CD8-positive, alpha-beta T cell (primary cell): ENCODE measurements at regions of chr7 and their contacts with region 1.

Region 1: DNA sequence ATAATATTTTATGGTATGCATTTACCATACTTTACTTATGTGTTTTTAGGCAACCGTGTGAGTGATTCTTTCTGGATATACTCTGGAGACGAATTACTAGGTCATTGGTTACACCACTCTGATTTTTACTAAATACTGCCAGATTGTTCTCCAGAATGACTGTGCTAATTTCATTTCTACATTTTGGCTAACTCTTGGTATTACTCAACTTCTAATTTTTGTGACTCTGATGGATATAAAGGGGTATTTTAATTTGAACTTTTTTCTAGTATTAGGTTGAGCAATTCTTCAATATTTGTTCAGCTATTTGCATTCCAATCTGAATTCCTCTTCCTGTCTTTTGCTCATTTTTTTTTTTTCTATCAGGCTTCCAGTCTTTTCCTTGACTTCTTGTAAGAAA is 223.6 kb downstream of the MDFIC start:
- DNase-seq: no peak
- ATAC-seq: no peak
- H3K4me3 ChIP-seq: no peak overlapping the region
- H3K4me3 Mint-ChIP-seq: no peak overlapping the region
- H3K27ac ChIP-seq: no peak overlapping the region
- H3K27ac Mint-ChIP-seq: no peak overlapping the region
- H3K4me1 ChIP-seq: no peaks in the 10 kb centered on the region
- H3K4me1 Mint-ChIP-seq: no peaks in the 10 kb centered on the region
- H3K27me3 ChIP-seq: no peaks in the 10 kb centered on the region
- H3K27me3 Mint-ChIP-seq: no peaks in the 10 kb centered on the region
- CTCF ChIP-seq: no peak

Region 2: DNA sequence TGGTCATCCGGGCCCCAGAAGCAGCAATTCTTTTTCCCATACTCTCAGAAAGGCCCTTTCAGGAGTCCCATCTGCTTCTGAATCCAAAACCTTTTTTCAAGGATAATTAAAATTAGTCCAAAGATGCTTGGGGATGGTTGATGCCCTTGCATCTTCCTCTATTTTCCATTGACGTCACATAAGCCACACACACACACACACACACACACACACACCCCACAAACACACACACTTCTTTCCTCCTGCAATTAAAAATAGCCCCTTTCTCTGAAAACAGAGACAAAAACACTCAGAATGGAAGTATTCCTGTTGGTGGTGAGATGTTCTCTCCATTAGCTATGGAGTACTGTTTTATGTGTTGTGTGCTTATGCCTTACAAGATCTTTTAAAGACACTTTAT is 397.9 kb before region 1 on chr7:
- CTCF ChIA-PET with region 1: no interaction called
- POLR2A ChIA-PET with region 1: no interaction called
- intact Hi-C with region 1: no loop called
- DNase-seq: no peak
- ATAC-seq: no peak
- H3K4me3 ChIP-seq: no peak overlapping the region
- H3K4me3 Mint-ChIP-seq: no peak overlapping the region
- H3K27ac ChIP-seq: no peak overlapping the region
- H3K27ac Mint-ChIP-seq: no peak overlapping the region
- H3K4me1 ChIP-seq: no peaks in the 10 kb centered on the region
- H3K4me1 Mint-ChIP-seq: no peaks in the 10 kb centered on the region
- H3K27me3 ChIP-seq: no peaks in the 10 kb centered on the region
- H3K27me3 Mint-ChIP-seq: no peaks in the 10 kb centered on the region
- CTCF ChIP-seq: no peak

Region 3: GRCh38 chr7:115178835-115179234 is 33.3 kb after region 1 on chr7:
- CTCF ChIA-PET with region 1: no interaction called
- POLR2A ChIA-PET with region 1: no interaction called
- intact Hi-C with region 1: loop called in 1 of 2 experiments (anchors 5 kb)
- DNase-seq: no peak
- ATAC-seq: no peak
- H3K4me3 ChIP-seq: no peak overlapping the region
- H3K4me3 Mint-ChIP-seq: no peak overlapping the region
- H3K27ac ChIP-seq: no peak overlapping the region
- H3K27ac Mint-ChIP-seq: no peak overlapping the region
- H3K4me1 ChIP-seq: no peaks in the 10 kb centered on the region
- H3K4me1 Mint-ChIP-seq: peaks cover 13% of the 10 kb centered on the region
- H3K27me3 ChIP-seq: no peaks in the 10 kb centered on the region
- H3K27me3 Mint-ChIP-seq: peaks cover 2% of the 10 kb centered on the region
- CTCF ChIP-seq: no peak

Region 4: GRCh38 chr7:115406219-115406618 is 260.7 kb after region 1 on chr7:
- CTCF ChIA-PET with region 1: no interaction called
- POLR2A ChIA-PET with region 1: no interaction called
- intact Hi-C with region 1: no loop called
- DNase-seq: no peak
- ATAC-seq: no peak
- H3K4me3 ChIP-seq: no peak overlapping the region
- H3K4me3 Mint-ChIP-seq: no peak overlapping the region
- H3K27ac ChIP-seq: no peak overlapping the region
- H3K27ac Mint-ChIP-seq: no peak overlapping the region
- H3K4me1 ChIP-seq: no peaks in the 10 kb centered on the region
- H3K4me1 Mint-ChIP-seq: peaks cover 10% of the 10 kb centered on the region
- H3K27me3 ChIP-seq: no peaks in the 10 kb centered on the region
- H3K27me3 Mint-ChIP-seq: peaks cover under 1% of the 10 kb centered on the region
- CTCF ChIP-seq: no peak